Activated CD4-positive, alpha-beta memory T cell treated with anti-CD3 and anti-CD28 coated beads for 36 hours (primary cell): ENCODE measurements at regions of chr15 and their contacts with region 1.

Region 1: DNA sequence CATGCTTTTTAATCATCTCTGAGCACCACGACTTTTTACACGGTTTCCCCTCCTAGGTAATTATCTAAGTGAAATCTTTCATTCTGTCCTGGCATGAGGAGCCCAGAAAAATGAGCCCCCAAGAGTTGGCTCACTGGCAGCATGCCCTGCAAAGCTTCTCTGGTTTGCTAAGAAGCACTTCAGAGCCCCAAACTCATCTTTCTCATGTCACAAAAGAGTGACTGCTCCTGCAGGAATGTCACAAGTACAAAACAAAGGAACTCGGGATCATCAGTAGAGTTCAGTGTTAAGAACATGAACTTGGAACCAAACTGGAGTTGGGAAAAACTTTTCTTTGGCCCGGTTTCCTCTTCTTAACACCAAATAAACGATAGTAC is 123.9 kb downstream of the FOXB1 start:
- DNase-seq: no peak
- H3K4me3 Mint-ChIP-seq: peak overlapping the region; percentile 67
- H3K27ac Mint-ChIP-seq: peak overlapping the region; percentile 76
- H3K4me1 Mint-ChIP-seq: peaks cover 52% of the 10 kb centered on the region
- H3K27me3 Mint-ChIP-seq: no peaks in the 10 kb centered on the region

Region 2: GRCh38 chr15:59797756-59798604 is 330.0 kb before region 1 on chr15:
- CTCF ChIA-PET with region 1: no interaction called
- POLR2A ChIA-PET with region 1: no interaction called
- intact Hi-C with region 1: loop called (anchors 5 kb)
- DNase-seq: no peak
- H3K4me3 Mint-ChIP-seq: peak overlapping the region; percentile 9
- H3K27ac Mint-ChIP-seq: peak overlapping the region; percentile 19
- H3K4me1 Mint-ChIP-seq: peaks cover 66% of the 10 kb centered on the region
- H3K27me3 Mint-ChIP-seq: no peaks in the 10 kb centered on the region

Region 3: GRCh38 chr15:60006203-60006862 is 121.7 kb before region 1 on chr15:
- CTCF ChIA-PET with region 1: no interaction called
- POLR2A ChIA-PET with region 1: interaction called, 5 read pairs
- intact Hi-C with region 1: loop called (anchors 1 kb)
- DNase-seq: peak; percentile 87
- H3K4me3 Mint-ChIP-seq: peak overlapping the region; percentile 84
- H3K27ac Mint-ChIP-seq: peak overlapping the region; percentile 77
- H3K4me1 Mint-ChIP-seq: peaks cover 45% of the 10 kb centered on the region
- H3K27me3 Mint-ChIP-seq: peaks cover 85% of the 10 kb centered on the region

Region 4: DNA sequence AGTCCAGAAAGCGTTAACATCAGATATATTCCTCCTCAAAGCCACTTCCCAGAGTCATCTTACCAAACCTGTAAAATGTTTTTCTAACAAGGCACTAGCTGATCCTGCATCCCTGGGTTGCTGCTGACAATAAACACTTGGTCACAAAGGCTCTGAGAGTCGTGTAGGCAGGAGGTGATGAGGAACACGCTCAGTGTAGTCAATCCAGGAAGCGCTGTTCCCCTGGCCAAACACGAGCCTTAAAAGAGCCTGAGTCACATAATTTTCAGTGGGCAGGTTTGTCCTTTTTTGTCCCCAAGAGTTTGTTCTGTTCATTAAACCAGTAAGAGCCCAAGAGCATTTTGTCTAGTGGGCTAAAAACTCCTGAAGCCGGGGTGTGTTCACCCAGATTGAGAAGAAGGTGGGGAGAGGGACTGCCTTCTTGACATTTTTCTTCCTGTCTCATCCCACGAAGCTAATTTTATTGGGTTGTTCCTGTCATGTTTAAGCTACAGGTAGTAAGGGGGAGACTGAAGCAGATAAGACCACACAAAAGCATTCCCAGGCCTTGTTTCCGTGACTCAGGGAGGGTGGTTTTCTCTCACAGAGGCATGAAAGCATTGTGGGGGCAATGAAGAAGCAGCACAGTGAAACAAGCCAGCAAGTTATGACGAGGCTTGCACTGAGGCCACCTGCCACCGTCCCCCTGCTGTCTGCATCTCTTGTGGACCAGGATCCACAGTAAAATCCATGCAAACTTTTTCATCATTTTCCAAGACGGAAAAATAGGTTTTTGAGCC is 50.2 kb before region 1 on chr15:
- CTCF ChIA-PET with region 1: no interaction called
- POLR2A ChIA-PET with region 1: no interaction called
- intact Hi-C with region 1: loop called (anchors 2 kb)
- DNase-seq: peak; percentile 70
- H3K4me3 Mint-ChIP-seq: no peak overlapping the region
- H3K27ac Mint-ChIP-seq: peak overlapping the region; percentile 62
- H3K4me1 Mint-ChIP-seq: peaks cover 52% of the 10 kb centered on the region
- H3K27me3 Mint-ChIP-seq: peaks cover 13% of the 10 kb centered on the region

Region 5: GRCh38 chr15:60110909-60111308 is 17.1 kb before region 1 on chr15:
- CTCF ChIA-PET with region 1: no interaction called
- POLR2A ChIA-PET with region 1: interaction called, 9 read pairs
- intact Hi-C with region 1: loop called (anchors 1 kb)
- DNase-seq: no peak
- H3K4me3 Mint-ChIP-seq: no peak overlapping the region
- H3K27ac Mint-ChIP-seq: peak overlapping the region; percentile 80
- H3K4me1 Mint-ChIP-seq: peaks cover 37% of the 10 kb centered on the region
- H3K27me3 Mint-ChIP-seq: peaks cover 8% of the 10 kb centered on the region

Region 6: GRCh38 chr15:60204131-60204885 is 76.3 kb after region 1 on chr15:
- CTCF ChIA-PET with region 1: no interaction called
- POLR2A ChIA-PET with region 1: no interaction called
- intact Hi-C with region 1: no loop called
- DNase-seq: no peak
- H3K4me3 Mint-ChIP-seq: no peak overlapping the region
- H3K27ac Mint-ChIP-seq: no peak overlapping the region
- H3K4me1 Mint-ChIP-seq: no peaks in the 10 kb centered on the region
- H3K27me3 Mint-ChIP-seq: peaks cover 39% of the 10 kb centered on the region

Region 7: DNA sequence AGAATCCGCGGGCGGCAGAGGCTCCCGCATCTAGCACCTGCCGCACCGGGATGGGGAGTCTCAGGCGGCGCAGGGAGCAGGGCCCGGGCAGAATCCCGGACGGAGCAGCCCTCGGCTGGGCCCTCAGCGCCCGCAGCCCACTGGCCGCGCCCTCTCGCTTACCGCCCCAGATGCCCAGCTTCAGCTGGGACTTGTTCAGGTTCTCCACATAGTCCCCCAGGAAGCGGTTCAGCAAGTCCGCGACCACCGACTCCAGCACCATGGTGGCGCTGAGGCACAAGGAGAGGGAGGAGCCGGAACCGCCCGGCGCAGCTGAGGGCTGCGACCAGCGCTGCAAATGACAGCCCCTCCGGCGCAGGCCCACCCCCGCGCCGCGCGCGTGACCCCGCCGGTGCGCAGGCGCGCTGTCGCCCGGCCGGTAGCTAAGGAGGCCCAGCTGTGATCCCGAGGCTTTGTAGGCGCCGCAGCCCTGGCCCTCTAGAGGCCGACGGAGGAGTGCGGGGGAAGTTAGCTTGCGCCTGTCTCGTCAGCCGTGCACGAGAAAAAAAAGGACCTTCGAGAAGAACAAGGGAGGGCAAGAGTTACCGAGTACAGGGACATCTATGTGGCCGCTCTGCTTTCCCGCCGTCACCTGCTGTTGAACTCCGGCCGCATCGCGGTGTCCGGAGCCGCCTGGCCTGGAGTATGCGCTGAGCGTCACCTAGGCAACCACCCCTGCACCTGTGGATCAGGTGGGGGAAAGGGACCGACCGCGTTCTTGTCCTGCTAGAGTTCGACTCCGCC is 1932.3 kb after region 1 on chr15 and contains the start of gene VPS13C:
- CTCF ChIA-PET with region 1: no interaction called
- POLR2A ChIA-PET with region 1: no interaction called
- intact Hi-C with region 1: loop called (anchors 10 kb)
- DNase-seq: peak; percentile 95
- H3K4me3 Mint-ChIP-seq: peak within 1 kb of the TSS; percentile 88
- H3K27ac Mint-ChIP-seq: peak within 1 kb of the TSS; percentile 90
- H3K4me1 Mint-ChIP-seq: peaks cover 42% of the 10 kb centered on the region
- H3K27me3 Mint-ChIP-seq: peaks cover 2% of the 10 kb centered on the region
- total RNA-seq, gene VPS13C: 44.6 to 52.4 TPM